Naive thymus-derived CD4-positive, alpha-beta T cell (primary cell): ENCODE measurements at regions of chr1 and their contacts with region 1.

Region 1: GRCh38 chr1:88800382-88801051 is 90.8 kb downstream of the GTF2B start:
- DNase-seq: peak in 6 of 9 donors; percentile 6 to 28 (median 26)
- ATAC-seq: peak; percentile 80
- H3K4me3 ChIP-seq: no peak overlapping the region
- H3K4me3 Mint-ChIP-seq: peak overlapping the region in 1 of 10 donors; percentile 17
- H3K27ac ChIP-seq: no peak overlapping the region
- H3K27ac Mint-ChIP-seq: peak overlapping the region in 3 of 9 donors; percentile 31 to 64 (median 47)
- H3K4me1 ChIP-seq: no peaks in the 10 kb centered on the region
- H3K4me1 Mint-ChIP-seq: peaks cover 0 to 14% (median 5%) of the 10 kb centered on the region in 7 donors
- H3K27me3 ChIP-seq: no peaks in the 10 kb centered on the region
- H3K27me3 Mint-ChIP-seq: no peaks in the 10 kb centered on the region

Region 2: GRCh38 chr1:88655685-88656299 is 144.7 kb before region 1 on chr1:
- CTCF ChIA-PET with region 1: no interaction called
- POLR2A ChIA-PET with region 1: no interaction called
- intact Hi-C with region 1: loop called (anchors 1 to 10 kb)
- DNase-seq: peak in 6 of 9 donors; percentile 5 to 49 (median 38)
- ATAC-seq: peak; percentile 34
- H3K4me3 ChIP-seq: no peak overlapping the region
- H3K4me3 Mint-ChIP-seq: no peak overlapping the region
- H3K27ac ChIP-seq: no peak overlapping the region
- H3K27ac Mint-ChIP-seq: no peak overlapping the region
- H3K4me1 ChIP-seq: no peaks in the 10 kb centered on the region
- H3K4me1 Mint-ChIP-seq: peaks cover 2 to 20% (median 16%) of the 10 kb centered on the region in 7 donors
- H3K27me3 ChIP-seq: no peaks in the 10 kb centered on the region
- H3K27me3 Mint-ChIP-seq: peaks cover 0 to 3% (median 0%) of the 10 kb centered on the region in 5 donors

Region 3: DNA sequence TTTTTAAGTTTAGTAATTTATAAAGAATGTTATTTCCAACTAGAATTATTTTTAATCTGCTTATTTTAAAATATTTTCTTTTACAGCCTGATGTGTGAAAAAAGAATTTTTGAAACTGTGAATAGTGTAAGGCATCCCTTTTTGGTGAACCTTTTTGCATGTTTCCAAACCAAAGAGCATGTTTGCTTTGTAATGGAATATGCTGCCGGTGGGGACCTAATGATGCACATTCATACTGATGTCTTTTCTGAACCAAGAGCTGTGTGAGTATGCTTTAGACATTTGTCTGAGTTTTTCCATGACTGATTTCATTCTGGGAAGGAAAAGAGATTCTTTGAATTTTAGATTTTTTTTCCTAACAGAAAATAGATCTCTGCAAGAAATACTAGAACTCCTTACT is 13.0 kb after region 1 on chr1:
- CTCF ChIA-PET with region 1: interaction called, 3 read pairs
- POLR2A ChIA-PET with region 1: no interaction called
- intact Hi-C with region 1: loop called in 1 of 2 experiments (anchors 2 kb)
- DNase-seq: no peak
- ATAC-seq: no peak
- H3K4me3 ChIP-seq: no peak overlapping the region
- H3K4me3 Mint-ChIP-seq: no peak overlapping the region
- H3K27ac ChIP-seq: no peak overlapping the region
- H3K27ac Mint-ChIP-seq: no peak overlapping the region
- H3K4me1 ChIP-seq: no peaks in the 10 kb centered on the region
- H3K4me1 Mint-ChIP-seq: no peaks in the 10 kb centered on the region
- H3K27me3 ChIP-seq: no peaks in the 10 kb centered on the region
- H3K27me3 Mint-ChIP-seq: no peaks in the 10 kb centered on the region

Region 4: DNA sequence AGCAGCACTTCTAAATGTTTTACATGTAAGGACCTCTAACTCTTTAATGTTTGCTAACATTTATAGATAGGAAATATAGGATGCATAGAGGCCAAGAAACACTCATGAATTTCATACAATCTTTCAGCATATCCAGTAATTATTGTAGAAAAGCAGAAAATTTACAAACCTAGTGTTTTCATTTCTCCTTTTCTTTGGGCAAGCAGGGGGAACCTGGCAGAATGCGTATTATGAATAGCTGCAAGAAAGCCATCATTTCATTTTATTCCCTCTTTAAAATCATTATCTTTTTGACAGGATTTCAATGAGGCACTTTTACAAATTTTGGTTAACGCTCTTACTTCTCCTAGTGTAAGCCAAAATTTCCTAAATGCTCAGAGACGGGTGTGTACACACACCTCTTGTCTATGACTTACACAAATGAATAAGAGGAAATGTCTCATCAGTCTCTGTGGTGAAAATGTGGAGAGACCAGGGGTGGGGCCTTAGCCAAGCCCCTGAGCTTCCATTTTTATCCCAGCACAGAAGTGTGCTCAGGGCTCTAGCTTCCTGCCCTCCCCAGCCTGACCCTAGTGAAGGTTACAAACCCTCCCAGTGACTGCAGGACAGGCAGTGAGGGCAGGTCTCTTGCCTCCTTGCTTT is 924.0 kb after region 1 on chr1:
- CTCF ChIA-PET with region 1: no interaction called
- POLR2A ChIA-PET with region 1: no interaction called
- intact Hi-C with region 1: no loop called
- DNase-seq: peak in 1 of 9 donors; percentile 70
- ATAC-seq: peak; percentile 84
- H3K4me3 ChIP-seq: no peak overlapping the region
- H3K4me3 Mint-ChIP-seq: peak overlapping the region in 2 of 10 donors; percentile 10 to 75
- H3K27ac ChIP-seq: no peak overlapping the region
- H3K27ac Mint-ChIP-seq: peak overlapping the region in 8 of 9 donors; percentile 41 to 89 (median 58)
- H3K4me1 ChIP-seq: peaks cover 18 to 41% of the 10 kb centered on the region in 2 donors
- H3K4me1 Mint-ChIP-seq: peaks cover 41 to 89% (median 52%) of the 10 kb centered on the region in 7 donors
- H3K27me3 ChIP-seq: no peaks in the 10 kb centered on the region
- H3K27me3 Mint-ChIP-seq: no peaks in the 10 kb centered on the region